GM13976 (cell line): ENCODE measurements at regions of chr2 and their contacts with region 1.

Region 1: GRCh38 chr2:187453078-187453641 is 5.1 kb upstream of the CALCRL start:
- DNase-seq: peak; percentile 5
- CTCF ChIP-seq: no peak

Region 2: GRCh38 chr2:185875136-185875931 is 1577.8 kb before region 1 on chr2:
- in situ Hi-C with region 1: no loop called
- DNase-seq: no peak
- CTCF ChIP-seq: no peak

Region 3: GRCh38 chr2:186887107-186888090 is 565.8 kb before region 1 on chr2:
- in situ Hi-C with region 1: loop called (anchors 25 kb)
- DNase-seq: no peak
- CTCF ChIP-seq: no peak

Region 4: GRCh38 chr2:186991766-186992417 is 461.3 kb before region 1 on chr2:
- in situ Hi-C with region 1: no loop called
- DNase-seq: no peak
- CTCF ChIP-seq: no peak